ENCODE measurements at regions of chr3 and their contacts with region 1.

Region 1: DNA sequence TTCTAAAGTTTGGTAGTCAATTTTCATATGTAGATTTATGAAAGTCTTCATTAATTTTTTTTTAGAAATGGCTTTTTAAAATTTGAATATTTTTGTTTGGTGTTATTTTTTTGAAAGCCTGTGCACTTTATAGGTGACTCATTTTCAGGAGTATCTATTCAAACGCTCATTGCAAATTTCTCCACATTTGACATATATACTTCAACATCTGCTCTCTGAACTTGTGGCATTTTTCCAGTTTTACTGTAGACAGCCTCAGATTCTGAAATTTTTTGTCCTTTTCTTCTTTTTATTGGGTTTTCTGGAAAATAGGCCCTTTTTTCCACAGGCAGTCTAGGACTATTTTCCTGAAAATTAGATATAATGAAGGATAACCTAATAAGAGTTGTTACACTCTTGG is 396.6 kb downstream of the RBMS3 start:
- DNase-seq: no peak
- ATAC-seq: no peak
- H3K4me3 ChIP-seq: no peak overlapping the region
- H3K27ac ChIP-seq: no peak overlapping the region
- H3K4me1 ChIP-seq: no peaks in the 10 kb centered on the region
- H3K27me3 ChIP-seq: no peaks in the 10 kb centered on the region
- CTCF ChIP-seq: no peak

Region 2: GRCh38 chr3:29582273-29582672 is 95.1 kb before region 1 on chr3:
- CTCF ChIA-PET with region 1: no interaction called
- POLR2A ChIA-PET with region 1: no interaction called
- intact Hi-C with region 1: loop called (anchors 1 kb)
- DNase-seq: no peak
- ATAC-seq: no peak
- H3K4me3 ChIP-seq: no peak overlapping the region
- H3K27ac ChIP-seq: no peak overlapping the region
- H3K4me1 ChIP-seq: no peaks in the 10 kb centered on the region
- H3K27me3 ChIP-seq: no peaks in the 10 kb centered on the region
- CTCF ChIP-seq: no peak

Measured in PC-3 (cell line).